CD14-positive monocyte (primary cell): ENCODE measurements at regions of chr21 and their contacts with region 1.

Region 1: GRCh38 chr21:39016740-39017315 is 166.4 kb downstream of the PSMG1 start:
- DNase-seq: peak; percentile 81 to 93 (median 90)
- H3K4me3 ChIP-seq: peak overlapping the region in 1 of 3 experiments; percentile 22
- H3K4me3 Mint-ChIP-seq: peak overlapping the region in 1 of 2 donors; percentile 42
- H3K27ac ChIP-seq: peak overlapping the region; percentile 39 to 50
- H3K27ac Mint-ChIP-seq: peak overlapping the region; percentile 63 to 89 (median 84)
- H3K4me1 ChIP-seq: peaks cover 67 to 83% of the 10 kb centered on the region in 2 donors
- H3K4me1 Mint-ChIP-seq: peaks cover 50% of the 10 kb centered on the region
- H3K27me3 ChIP-seq: no peaks in the 10 kb centered on the region
- H3K27me3 Mint-ChIP-seq: peaks cover 0 to 3% (median 3%) of the 10 kb centered on the region in 3 donors
- CTCF ChIP-seq: no peak

Region 2: GRCh38 chr21:38196036-38196435 is 820.8 kb before region 1 on chr21:
- intact Hi-C with region 1: no loop called
- DNase-seq: peak; percentile 18 to 50 (median 46)
- H3K4me3 ChIP-seq: no peak overlapping the region
- H3K4me3 Mint-ChIP-seq: peak overlapping the region in 1 of 2 donors; percentile 57
- H3K27ac ChIP-seq: no peak overlapping the region
- H3K27ac Mint-ChIP-seq: peak overlapping the region in 3 of 7 donors; percentile 28 to 73 (median 31)
- H3K4me1 ChIP-seq: peaks cover 4 to 7% of the 10 kb centered on the region in 2 donors
- H3K4me1 Mint-ChIP-seq: peaks cover 7% of the 10 kb centered on the region
- H3K27me3 ChIP-seq: no peaks in the 10 kb centered on the region
- H3K27me3 Mint-ChIP-seq: peaks cover 2 to 10% (median 2%) of the 10 kb centered on the region in 3 donors
- CTCF ChIP-seq: no peak

Region 3: DNA sequence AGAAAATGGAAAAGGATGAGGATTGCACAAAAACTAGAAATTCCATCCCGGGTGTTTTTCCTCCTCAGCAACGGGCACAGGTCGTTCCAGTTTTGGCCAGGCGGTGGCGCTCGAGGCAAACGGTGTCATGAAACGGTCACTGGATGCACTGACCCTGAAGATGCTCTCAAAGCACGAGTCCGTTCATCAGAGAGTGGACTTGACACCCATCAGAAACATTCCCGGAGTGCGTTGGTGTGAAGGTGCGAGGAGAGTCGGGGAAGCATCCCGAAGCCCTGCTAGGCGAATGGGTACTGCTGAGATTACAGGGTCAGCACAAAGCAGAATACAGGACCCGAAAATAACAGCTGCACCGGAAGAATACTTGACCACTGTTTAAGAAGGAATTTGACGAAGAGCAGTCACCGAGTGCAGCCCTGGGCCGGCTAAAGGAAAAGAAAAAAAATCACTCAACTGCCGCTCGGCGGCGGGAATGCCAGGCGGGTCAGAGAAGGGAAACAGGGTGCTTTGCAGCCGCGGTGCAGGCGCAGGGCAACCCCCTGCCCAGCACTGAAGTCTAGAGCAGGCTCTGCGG is 282.8 kb before region 1 on chr21:
- intact Hi-C with region 1: loop called in 1 of 2 experiments (anchors 10 kb)
- DNase-seq: peak; percentile 71 to 83 (median 79)
- H3K4me3 ChIP-seq: peak overlapping the region; percentile 32 to 79 (median 47)
- H3K4me3 Mint-ChIP-seq: peak overlapping the region; percentile 88 to 96
- H3K27ac ChIP-seq: peak overlapping the region; percentile 75 to 77
- H3K27ac Mint-ChIP-seq: peak overlapping the region; percentile 90 to 98 (median 96)
- H3K4me1 ChIP-seq: peaks cover 14 to 19% of the 10 kb centered on the region in 2 donors
- H3K4me1 Mint-ChIP-seq: peaks cover 21% of the 10 kb centered on the region
- H3K27me3 ChIP-seq: no peaks in the 10 kb centered on the region
- H3K27me3 Mint-ChIP-seq: peaks cover 0 to 4% (median 0%) of the 10 kb centered on the region in 3 donors
- CTCF ChIP-seq: peak; percentile 95

Region 4: DNA sequence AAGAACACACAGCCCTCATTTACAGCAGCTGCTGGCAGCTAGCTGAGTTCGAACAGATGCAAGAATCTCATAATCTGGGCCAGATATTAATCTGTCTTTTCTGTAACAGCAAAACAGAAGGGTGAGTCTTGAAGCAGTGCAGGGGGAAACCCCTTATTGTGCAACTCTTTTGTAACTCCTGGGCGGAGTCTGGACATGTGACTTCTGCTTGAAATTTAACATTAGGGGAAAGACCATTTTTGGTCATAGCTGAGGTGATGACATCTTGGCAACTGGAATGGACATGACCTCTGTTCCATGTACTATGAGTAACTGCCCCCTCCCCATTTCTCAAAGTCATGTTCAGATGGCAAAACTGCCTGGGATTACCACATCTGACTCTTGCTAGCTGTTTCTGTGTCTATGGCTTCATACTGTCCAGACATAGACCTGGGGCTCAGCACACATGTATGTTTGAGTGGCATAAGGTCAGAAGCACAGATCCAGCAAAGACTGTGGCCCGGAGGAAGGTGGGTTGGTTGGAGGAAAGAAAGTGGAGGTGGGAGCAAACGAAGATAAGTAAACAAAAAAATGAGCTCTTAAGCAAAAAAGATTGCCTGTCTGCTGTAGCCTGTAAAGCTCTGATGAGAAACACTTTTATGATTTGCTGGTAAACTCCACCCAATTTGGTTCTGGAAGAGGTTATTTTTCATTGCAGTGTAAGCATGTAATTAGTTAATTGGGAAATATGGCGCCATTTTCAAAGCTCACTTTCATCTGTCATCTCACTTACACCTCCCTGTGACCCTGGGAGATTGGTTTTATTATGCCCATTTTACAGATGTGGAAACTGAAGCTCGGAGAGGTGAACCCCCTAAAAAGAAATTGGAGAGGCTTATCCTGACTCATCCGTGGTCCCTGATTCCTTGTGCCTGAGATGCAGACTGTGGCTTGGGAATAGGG is 185.0 kb before region 1 on chr21:
- intact Hi-C with region 1: loop called (anchors 5 to 10 kb)
- DNase-seq: peak; percentile 99 to 100 (median 99)
- H3K4me3 ChIP-seq: peak overlapping the region in 1 of 3 experiments; percentile 58
- H3K4me3 Mint-ChIP-seq: peak overlapping the region; percentile 39 to 82
- H3K27ac ChIP-seq: peak overlapping the region; percentile 89 to 95
- H3K27ac Mint-ChIP-seq: peak overlapping the region; percentile 94 to 99 (median 98)
- H3K4me1 ChIP-seq: peaks cover 26 to 27% of the 10 kb centered on the region in 2 donors
- H3K4me1 Mint-ChIP-seq: peaks cover 31% of the 10 kb centered on the region
- H3K27me3 ChIP-seq: no peaks in the 10 kb centered on the region
- H3K27me3 Mint-ChIP-seq: no peaks in the 10 kb centered on the region
- CTCF ChIP-seq: no peak